ENCODE measurements at regions of chr12 and their contacts with region 1.

Region 1: DNA sequence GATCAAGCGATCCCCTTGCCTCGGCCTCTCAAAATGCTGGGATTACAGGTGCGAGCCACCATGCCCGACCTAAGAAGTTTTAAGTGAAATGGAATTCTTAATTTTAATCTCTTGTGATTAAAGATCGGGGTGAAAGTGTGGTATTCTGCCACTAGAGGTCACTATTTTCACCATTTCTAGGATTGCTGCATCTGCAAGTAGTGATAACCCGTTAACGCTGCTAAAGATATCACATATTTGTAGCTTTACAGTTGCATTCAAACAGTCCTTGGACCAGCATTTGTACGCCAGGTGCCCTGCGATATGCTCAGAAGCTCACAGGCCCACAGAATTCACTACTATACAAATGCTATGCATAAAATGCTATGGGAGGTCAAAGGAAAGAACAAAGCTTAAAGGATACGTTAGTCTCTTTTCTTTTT is 19.3 kb downstream of the CCDC62 start:
- DNase-seq: no peak

Region 2: GRCh38 chr12:122951979-122952892 is 158.5 kb after region 1 on chr12:
- intact Hi-C with region 1: loop called (anchors 2 kb)
- DNase-seq: peak; percentile 92